Activated CD8-positive, alpha-beta T cell treated with anti-CD3 and anti-CD28 coated beads for 36 hours (primary cell): ENCODE measurements at regions of chr6 and their contacts with region 1.

Region 1: DNA sequence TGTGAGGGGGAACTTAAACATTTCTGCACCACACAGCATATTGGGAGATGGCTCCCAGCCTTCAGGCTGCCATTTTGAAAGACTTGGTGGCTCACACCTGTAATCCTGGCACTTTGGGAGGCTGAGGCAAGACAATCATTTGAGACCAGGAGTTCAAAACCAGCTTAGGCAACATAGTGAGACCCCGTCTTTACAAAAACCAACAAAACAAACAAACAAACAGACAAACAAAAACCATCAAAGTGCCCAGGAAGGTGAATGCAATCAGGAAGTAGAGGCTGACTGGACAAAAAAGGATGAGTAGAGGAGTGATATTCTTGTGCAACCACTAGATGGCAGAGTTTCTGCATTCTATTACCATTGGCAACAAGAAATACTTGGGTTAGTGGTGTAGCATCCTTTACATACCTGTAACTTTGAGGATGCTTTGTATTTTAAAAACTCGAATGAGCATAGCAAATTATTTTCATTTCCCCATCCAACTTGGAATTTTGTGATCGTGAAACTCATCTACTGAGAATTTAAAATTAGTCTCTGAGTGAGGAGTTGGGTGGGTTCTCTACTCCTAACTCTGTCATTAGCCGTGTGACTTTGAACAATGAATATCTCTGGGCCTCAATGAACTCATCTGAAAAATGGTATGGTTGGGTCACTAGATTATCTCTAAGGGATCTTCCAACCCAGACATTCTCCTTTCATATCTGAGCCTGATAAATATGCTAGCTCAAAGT is 84.4 kb downstream of the CRYBG1 start:
- DNase-seq: peak; percentile 17
- ATAC-seq: peak; percentile 81
- H3K4me3 Mint-ChIP-seq: no peak overlapping the region
- H3K27ac Mint-ChIP-seq: no peak overlapping the region
- H3K4me1 Mint-ChIP-seq: peaks cover 12% of the 10 kb centered on the region
- H3K27me3 Mint-ChIP-seq: peaks cover 18% of the 10 kb centered on the region
- CTCF ChIP-seq: peak; percentile 81

Region 2: DNA sequence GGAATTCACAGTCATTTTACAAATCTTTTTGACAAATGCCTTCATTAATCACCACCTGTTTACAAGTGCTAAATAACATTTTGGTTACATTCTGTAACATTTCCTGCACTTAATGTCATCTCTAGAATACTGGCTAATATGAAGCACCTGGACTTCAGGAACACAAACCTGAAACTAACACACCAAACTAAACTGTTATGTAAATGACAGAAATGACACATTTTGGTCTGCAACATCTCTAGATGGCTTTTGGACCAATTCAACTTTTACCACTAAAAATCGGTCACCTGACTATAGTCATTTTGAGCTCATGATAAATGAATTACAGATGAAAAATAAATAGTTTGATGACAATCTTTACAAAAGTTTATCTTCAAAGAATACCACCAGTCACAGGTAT is 200.0 kb before region 1 on chr6:
- CTCF ChIA-PET with region 1: no interaction called
- POLR2A ChIA-PET with region 1: no interaction called
- intact Hi-C with region 1: no loop called
- DNase-seq: no peak
- ATAC-seq: no peak
- H3K4me3 Mint-ChIP-seq: no peak overlapping the region
- H3K27ac Mint-ChIP-seq: no peak overlapping the region
- H3K4me1 Mint-ChIP-seq: peaks cover 16% of the 10 kb centered on the region
- H3K27me3 Mint-ChIP-seq: no peaks in the 10 kb centered on the region
- CTCF ChIP-seq: no peak

Region 3: DNA sequence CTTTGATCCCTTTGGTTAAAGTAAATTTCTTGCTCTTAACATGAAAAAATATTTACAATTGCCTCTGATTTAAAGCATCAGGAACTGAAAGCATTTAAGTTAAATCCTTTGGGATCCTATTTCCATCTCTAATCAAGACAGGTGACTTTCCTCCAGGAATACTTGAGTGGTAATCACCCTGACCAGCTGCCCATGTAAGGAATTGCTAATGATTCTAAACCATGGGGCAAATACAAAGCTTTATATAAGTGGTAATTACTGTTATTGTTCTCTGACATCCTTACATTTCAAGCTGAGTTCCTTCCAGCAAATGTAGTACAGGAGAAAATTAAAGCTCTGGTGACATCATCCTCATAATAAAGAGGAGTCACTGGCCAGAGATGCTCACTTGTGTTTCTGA is 16.1 kb after region 1 on chr6:
- CTCF ChIA-PET with region 1: interaction called, 12 read pairs
- POLR2A ChIA-PET with region 1: no interaction called
- intact Hi-C with region 1: no loop called
- DNase-seq: no peak
- ATAC-seq: no peak
- H3K4me3 Mint-ChIP-seq: no peak overlapping the region
- H3K27ac Mint-ChIP-seq: no peak overlapping the region
- H3K4me1 Mint-ChIP-seq: no peaks in the 10 kb centered on the region
- H3K27me3 Mint-ChIP-seq: no peaks in the 10 kb centered on the region
- CTCF ChIP-seq: no peak

Region 4: DNA sequence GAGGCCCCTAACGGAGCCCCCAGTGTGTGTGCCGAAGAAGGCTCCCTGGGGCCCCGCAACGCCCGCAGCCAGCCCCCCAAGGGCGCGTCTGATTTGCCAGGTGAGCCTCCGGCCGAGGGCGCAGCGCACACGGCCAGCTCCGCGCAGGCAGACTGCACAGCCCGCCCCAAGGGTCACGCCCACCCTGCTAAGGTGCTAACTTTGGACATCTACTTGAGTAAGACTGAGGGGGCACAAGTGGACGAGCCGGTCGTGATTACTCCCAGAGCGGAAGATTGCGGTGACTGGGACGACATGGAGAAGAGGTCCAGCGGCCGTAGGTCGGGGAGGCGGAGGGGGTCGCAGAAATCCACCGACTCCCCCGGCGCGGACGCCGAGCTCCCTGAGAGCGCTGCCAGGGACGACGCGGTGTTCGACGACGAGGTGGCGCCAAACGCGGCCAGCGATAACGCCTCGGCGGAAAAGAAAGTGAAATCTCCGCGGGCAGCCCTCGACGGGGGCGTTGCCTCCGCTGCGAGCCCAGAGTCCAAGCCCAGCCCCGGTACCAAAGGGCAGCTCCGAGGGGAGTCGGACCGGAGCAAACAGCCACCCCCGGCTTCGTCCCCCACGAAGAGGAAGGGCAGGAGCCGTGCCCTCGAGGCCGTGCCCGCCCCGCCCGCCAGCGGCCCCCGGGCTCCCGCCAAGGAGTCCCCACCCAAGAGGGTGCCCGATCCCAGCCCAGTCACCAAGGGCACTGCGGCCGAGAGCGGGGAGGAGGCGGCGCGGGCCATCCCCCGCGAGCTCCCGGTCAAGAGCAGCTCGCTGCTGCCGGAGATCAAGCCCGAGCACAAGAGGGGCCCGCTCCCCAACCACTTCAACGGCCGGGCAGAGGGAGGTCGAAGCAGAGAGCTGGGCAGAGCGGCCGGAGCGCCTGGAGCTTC is 67.4 kb after region 1 on chr6:
- CTCF ChIA-PET with region 1: interaction called, 21 read pairs
- POLR2A ChIA-PET with region 1: interaction called, 4 read pairs
- intact Hi-C with region 1: loop called (anchors 5 kb)
- DNase-seq: peak; percentile 83
- ATAC-seq: peak; percentile 62
- H3K4me3 Mint-ChIP-seq: peak overlapping the region; percentile 90
- H3K27ac Mint-ChIP-seq: peak overlapping the region; percentile 93
- H3K4me1 Mint-ChIP-seq: peaks cover 38% of the 10 kb centered on the region
- H3K27me3 Mint-ChIP-seq: no peaks in the 10 kb centered on the region
- CTCF ChIP-seq: peak; percentile 56

Region 5: DNA sequence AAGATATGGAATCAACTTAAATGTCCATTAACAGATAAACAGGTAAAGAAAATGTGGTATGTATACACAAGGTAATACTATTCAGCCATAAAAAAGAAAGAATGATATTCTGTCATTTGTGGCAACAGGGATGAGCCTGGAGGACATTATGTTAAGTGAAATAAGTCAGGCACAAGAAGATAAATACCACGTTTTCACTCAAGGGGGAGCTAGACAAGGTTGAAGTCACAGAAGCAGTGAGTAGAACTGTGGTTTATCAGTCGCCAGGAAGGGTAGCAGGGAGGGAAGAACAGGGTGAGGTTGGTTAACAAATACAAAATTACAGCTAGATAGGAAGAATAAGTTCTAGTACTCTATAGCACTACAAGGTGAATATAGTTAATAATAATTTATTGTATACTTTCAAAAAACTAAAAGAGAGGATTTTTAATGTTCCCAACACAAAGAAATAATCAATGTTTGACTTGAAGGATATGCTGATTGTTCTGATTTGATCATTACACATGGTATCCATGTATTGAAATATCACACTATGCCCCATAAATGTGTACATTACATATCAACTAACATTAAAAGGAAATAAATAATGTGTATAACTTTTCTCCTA is 163.2 kb after region 1 on chr6:
- CTCF ChIA-PET with region 1: interaction called, 10 read pairs
- POLR2A ChIA-PET with region 1: no interaction called
- intact Hi-C with region 1: no loop called
- DNase-seq: peak; percentile 26
- ATAC-seq: peak; percentile 72
- H3K4me3 Mint-ChIP-seq: no peak overlapping the region
- H3K27ac Mint-ChIP-seq: no peak overlapping the region
- H3K4me1 Mint-ChIP-seq: peaks cover 9% of the 10 kb centered on the region
- H3K27me3 Mint-ChIP-seq: no peaks in the 10 kb centered on the region
- CTCF ChIP-seq: peak; percentile 87

Region 6: DNA sequence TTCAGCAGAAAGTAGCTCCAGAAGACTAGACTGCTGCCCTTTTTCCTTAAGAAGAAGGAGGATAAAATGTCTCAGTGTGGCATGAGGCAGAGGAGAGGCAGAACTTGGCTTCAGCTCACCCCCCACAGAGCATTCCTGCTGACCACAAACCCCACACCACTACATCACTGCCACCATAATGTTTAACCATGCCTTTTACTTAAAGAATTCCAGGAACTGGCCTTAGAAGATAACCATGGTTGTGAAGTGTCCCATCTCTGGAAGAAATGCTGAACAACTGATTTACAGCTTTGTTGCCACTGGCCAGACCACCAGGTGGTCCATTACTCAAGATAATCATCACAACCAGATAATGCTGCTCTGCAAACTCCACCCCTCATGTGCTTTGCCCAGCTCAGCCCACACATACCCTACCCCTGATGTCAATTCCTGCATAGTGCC is 375.5 kb after region 1 on chr6:
- CTCF ChIA-PET with region 1: no interaction called
- POLR2A ChIA-PET with region 1: no interaction called
- intact Hi-C with region 1: no loop called
- DNase-seq: no peak
- ATAC-seq: no peak
- H3K4me3 Mint-ChIP-seq: no peak overlapping the region
- H3K27ac Mint-ChIP-seq: no peak overlapping the region
- H3K4me1 Mint-ChIP-seq: no peaks in the 10 kb centered on the region
- H3K27me3 Mint-ChIP-seq: peaks cover 3% of the 10 kb centered on the region
- CTCF ChIP-seq: no peak